Common myeloid progenitor, CD34-positive (primary cell): ENCODE measurements at regions of chr1 and their contacts with region 1.

Region 1: DNA sequence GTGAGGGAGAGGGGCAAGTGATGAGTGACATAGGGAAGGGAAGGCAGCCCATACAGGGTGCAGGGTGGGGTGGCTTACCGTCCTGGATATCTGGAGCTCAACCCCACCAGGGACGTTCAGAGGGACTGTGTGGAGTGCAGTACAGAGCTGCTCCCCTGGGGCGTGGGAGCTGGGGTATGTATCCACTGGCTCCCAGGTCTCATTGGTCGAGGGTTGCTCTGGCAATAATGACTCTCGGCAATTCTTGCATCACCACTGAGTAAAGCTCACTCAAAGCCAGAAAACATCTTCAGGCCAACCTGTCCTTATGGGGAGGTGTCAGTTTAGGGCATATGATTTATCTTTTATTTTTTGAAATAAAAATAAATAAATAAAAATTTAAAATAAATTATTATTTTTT is 43.2 kb upstream of the RUNX3 start:
- DNase-seq: no peak
- H3K4me3 ChIP-seq: no peak overlapping the region
- H3K27ac ChIP-seq: no peak overlapping the region
- H3K4me1 ChIP-seq: peaks cover 0 to 48% (median 23%) of the 10 kb centered on the region in 4 experiments
- H3K27me3 ChIP-seq: no peaks in the 10 kb centered on the region

Region 2: GRCh38 chr1:24905355-24905978 is 67.8 kb before region 1 on chr1:
- CTCF ChIA-PET with region 1: no interaction called
- POLR2A ChIA-PET with region 1: no interaction called
- DNase-seq: no peak
- H3K4me3 ChIP-seq: no peak overlapping the region
- H3K27ac ChIP-seq: no peak overlapping the region
- H3K4me1 ChIP-seq: peaks cover 0 to 4% (median 2%) of the 10 kb centered on the region in 4 experiments
- H3K27me3 ChIP-seq: no peaks in the 10 kb centered on the region

Region 3: DNA sequence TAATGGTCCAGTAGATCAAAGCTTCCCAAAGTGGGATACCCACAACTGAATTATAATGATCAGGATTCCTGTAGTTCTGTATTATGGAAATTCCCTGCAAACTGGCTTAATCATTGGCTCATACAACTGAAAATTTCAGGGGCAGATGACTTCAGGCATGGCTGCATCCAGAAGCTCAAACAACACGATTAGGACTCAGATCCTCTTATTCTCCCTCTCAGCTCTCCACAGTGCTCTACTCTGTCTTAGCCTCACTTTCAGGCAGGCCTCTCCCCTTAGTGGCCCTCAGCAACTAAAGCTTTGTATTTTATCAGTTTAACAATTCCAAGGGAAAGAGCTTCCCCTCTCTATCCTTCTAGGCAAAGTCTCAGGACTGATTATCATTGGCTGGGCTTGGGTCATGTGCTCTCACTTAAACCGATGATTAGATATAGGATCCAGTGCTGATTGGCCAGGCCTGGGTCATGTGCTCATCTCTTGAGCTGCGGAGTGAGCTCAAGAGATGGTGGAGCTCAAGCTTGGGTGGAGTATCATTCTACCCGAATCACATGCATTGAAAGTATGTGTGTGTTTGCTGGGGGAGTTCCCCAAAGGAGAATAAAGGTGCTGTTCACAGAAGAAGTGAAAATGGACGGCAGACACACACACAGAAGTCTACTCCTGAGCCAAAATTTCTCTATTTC is 14.7 kb after region 1 on chr1:
- CTCF ChIA-PET with region 1: interaction called, 11 read pairs
- POLR2A ChIA-PET with region 1: no interaction called
- DNase-seq: no peak
- H3K4me3 ChIP-seq: no peak overlapping the region
- H3K27ac ChIP-seq: no peak overlapping the region
- H3K4me1 ChIP-seq: peaks cover 0 to 66% (median 24%) of the 10 kb centered on the region in 4 experiments
- H3K27me3 ChIP-seq: no peaks in the 10 kb centered on the region

Region 4: DNA sequence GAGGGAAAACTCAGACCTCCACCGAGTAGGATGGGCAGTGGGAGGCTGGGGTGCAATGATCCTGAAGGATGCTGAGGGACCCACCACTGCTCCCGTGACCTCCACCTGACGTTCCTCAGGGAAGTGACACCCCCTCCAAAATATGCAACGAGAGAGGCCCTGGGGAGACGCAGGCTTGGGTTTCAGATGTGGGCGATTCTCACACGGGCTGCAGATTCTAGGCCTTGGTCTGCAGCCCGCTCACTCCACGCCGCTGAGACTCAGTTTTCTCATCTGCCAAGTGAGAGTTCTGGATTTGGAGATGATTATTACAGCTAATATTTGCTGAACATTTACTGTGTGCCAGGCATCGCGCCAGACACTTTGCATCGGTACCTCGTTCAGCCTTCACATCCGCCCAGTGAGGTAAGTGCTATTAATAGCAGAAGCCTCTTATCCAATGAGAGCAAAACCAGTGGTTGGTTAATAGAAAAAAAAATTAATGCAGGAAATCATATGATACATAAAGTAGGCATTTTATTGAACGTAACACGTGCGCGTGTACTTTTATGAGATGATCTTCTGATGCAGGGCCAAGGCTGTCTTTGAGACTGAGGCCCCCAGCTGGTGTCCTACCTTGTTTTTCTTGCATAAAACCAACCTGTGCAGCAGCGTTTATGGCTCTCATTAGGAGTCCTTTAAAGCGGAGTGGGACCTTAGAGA is 58.8 kb after region 1 on chr1:
- CTCF ChIA-PET with region 1: no interaction called
- POLR2A ChIA-PET with region 1: no interaction called
- DNase-seq: peak; percentile 72 to 91 (median 88)
- H3K4me3 ChIP-seq: peak overlapping the region in 1 of 7 experiments; percentile 7
- H3K27ac ChIP-seq: peak overlapping the region; percentile 67 to 83
- H3K4me1 ChIP-seq: peaks cover 20 to 99% (median 94%) of the 10 kb centered on the region in 4 experiments
- H3K27me3 ChIP-seq: no peaks in the 10 kb centered on the region